Natural killer cell (primary cell): ENCODE measurements at regions of chr20 and their contacts with region 1.

Region 1: DNA sequence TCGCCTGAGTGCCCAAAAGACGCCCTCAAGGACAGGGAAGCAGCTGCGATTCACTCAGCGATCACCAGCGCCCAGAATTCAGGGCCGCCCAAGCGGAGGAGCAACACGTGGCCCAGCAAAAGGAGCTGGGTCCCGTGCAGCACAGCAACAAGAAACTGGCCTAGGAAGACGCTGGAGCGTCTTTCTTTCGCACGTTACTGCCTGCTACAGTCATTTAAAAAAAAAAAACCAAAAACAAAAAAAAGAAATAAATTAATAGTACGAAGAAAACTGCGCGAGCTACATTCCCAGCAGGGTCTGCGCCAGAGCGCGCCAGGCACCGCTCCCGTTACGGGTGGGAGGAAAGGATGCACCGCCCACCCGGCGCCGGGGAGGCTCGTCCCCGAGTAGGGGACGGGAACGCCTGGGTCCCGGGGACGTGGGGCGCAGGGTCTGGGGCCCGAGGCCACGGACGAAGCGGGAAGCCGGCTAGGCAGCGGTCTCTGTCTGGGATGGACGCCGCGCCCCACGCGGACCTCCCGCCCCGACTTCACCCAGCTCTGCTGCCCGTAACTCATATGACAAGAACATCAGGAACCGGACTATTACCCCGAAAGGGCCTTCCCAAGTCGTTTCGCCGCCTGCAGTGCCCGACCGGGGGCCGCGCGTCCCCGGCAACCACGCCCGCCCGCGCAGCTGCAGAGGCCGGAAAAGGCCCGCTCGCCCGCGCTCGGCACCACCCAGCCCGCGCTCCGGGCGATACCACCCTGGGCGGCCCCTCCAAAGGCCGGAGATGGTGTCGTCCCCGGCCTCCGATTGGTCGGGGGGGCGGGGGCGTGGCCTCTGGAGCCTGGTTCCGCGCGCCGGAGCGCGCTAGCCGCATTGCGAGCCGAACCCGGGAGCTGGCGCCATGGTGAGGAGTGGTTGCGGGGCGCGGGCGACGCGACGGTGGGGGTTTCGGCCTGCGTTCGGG is at the start of gene NOP56:
- DNase-seq: peak; percentile 96 to 98
- ATAC-seq: peak; percentile 94 to 99 (median 96)
- H3K4me3 ChIP-seq: peak within 1 kb of the TSS; percentile 77
- H3K4me3 Mint-ChIP-seq: peak within 1 kb of the TSS; percentile 95
- H3K27ac ChIP-seq: peak within 1 kb of the TSS; percentile 65
- H3K27ac Mint-ChIP-seq: peak within 1 kb of the TSS; percentile 79 to 87
- H3K4me1 ChIP-seq: peaks cover 24% of the 10 kb centered on the region
- H3K4me1 Mint-ChIP-seq: peaks cover 16 to 33% of the 10 kb centered on the region in 2 donors
- H3K27me3 ChIP-seq: no peaks in the 10 kb centered on the region
- H3K27me3 Mint-ChIP-seq: no peaks in the 10 kb centered on the region
- CTCF ChIP-seq: no peak
- total RNA-seq, gene NOP56: 169 to 216 (median 214) TPM

Region 2: GRCh38 chr20:2523919-2524708 is 127.9 kb before region 1 on chr20:
- intact Hi-C with region 1: loop called (anchors 2 kb)
- DNase-seq: peak; percentile 90 to 92
- ATAC-seq: peak; percentile 86 to 92 (median 91)
- H3K4me3 ChIP-seq: peak overlapping the region; percentile 67
- H3K4me3 Mint-ChIP-seq: peak overlapping the region; percentile 92
- H3K27ac ChIP-seq: peak overlapping the region; percentile 32
- H3K27ac Mint-ChIP-seq: peak overlapping the region; percentile 18 to 91
- H3K4me1 ChIP-seq: peaks cover 11% of the 10 kb centered on the region
- H3K4me1 Mint-ChIP-seq: peaks cover 7 to 27% of the 10 kb centered on the region in 2 donors
- H3K27me3 ChIP-seq: no peaks in the 10 kb centered on the region
- H3K27me3 Mint-ChIP-seq: peaks cover 0 to 2% of the 10 kb centered on the region in 2 donors
- CTCF ChIP-seq: peak; percentile 97

Region 3: GRCh38 chr20:2680046-2680445 is 28.0 kb after region 1 on chr20:
- intact Hi-C with region 1: no loop called
- DNase-seq: no peak
- ATAC-seq: no peak
- H3K4me3 ChIP-seq: no peak overlapping the region
- H3K4me3 Mint-ChIP-seq: no peak overlapping the region
- H3K27ac ChIP-seq: no peak overlapping the region
- H3K27ac Mint-ChIP-seq: no peak overlapping the region
- H3K4me1 ChIP-seq: peaks cover 3% of the 10 kb centered on the region
- H3K4me1 Mint-ChIP-seq: peaks cover 0 to 3% of the 10 kb centered on the region in 2 donors
- H3K27me3 ChIP-seq: no peaks in the 10 kb centered on the region
- H3K27me3 Mint-ChIP-seq: peaks cover 9 to 20% of the 10 kb centered on the region in 2 donors
- CTCF ChIP-seq: no peak

Region 4: GRCh38 chr20:2800521-2801285 is 148.7 kb after region 1 on chr20 and contains the start of gene CPXM1:
- intact Hi-C with region 1: no loop called
- DNase-seq: peak in 1 of 2 donors; percentile 25
- ATAC-seq: peak; percentile 67 to 73 (median 71)
- H3K4me3 ChIP-seq: no peak within 1 kb of the TSS
- H3K4me3 Mint-ChIP-seq: peak within 1 kb of the TSS; percentile 94
- H3K27ac ChIP-seq: no peak within 1 kb of the TSS
- H3K27ac Mint-ChIP-seq: peak within 1 kb of the TSS; percentile 23 to 44
- H3K4me1 ChIP-seq: peaks cover 20% of the 10 kb centered on the region
- H3K4me1 Mint-ChIP-seq: peaks cover 25 to 26% of the 10 kb centered on the region in 2 donors
- H3K27me3 ChIP-seq: peaks cover 28% of the 10 kb centered on the region
- H3K27me3 Mint-ChIP-seq: peaks cover 46 to 62% of the 10 kb centered on the region in 2 donors
- CTCF ChIP-seq: no peak
- total RNA-seq, gene CPXM1: 0.49 to 2.3 (median 1.5) TPM